Activated naive CD4-positive, alpha-beta T cell treated with anti-CD3 and anti-CD28 coated beads, Interleukin-2, amount 10 ng/mL, durations not matched to agents 7 days and 5 days (primary cell): ENCODE measurements at regions of chr17 and their contacts with region 1.

Region 1: GRCh38 chr17:38557836-38558727 is 47.7 kb downstream of the SRCIN1 start:
- DNase-seq: peak; percentile 92
- H3K4me3 Mint-ChIP-seq: peak overlapping the region; percentile 73
- H3K27ac Mint-ChIP-seq: no peak overlapping the region
- H3K4me1 Mint-ChIP-seq: peaks cover 31% of the 10 kb centered on the region
- H3K27me3 Mint-ChIP-seq: peaks cover 92% of the 10 kb centered on the region

Region 2: DNA sequence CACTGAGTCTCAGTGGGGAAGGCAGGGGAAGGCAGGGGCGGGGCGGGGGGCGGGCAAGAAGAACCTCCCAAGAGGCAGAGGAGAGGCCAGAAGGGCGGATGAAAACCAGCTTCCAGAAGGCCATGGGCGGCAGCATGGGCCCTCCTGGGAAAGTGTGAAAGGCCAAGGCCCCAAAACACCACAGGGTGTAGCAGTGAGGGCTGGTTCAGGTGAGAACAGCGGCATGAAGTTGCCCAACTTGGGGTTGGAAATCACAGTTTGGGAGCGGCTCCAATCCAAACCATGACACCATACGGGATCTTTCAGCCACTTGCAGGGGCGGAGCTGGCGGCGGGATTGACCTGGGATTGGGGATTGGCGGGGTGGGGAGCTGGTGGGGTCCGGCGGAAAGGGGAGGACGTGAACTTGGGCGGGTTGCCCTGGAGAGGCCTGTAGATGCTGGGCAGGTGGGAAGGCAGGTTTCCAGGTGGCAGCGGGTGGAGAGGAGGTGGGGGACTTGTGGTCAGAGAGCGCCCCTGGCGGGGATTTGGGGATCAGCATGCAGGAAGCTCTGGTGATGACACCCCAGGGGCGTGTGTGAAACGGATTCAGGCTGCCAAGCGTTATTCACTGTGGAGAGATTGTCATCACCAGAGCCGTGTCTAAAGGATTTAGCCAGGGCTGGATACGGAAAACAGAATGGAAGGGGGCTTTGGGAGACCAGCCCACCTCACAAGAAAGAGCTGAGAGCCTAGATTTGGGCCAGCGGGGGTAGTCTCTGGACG is 48.9 kb before region 1 on chr17:
- CTCF ChIA-PET with region 1: interaction called, 10 read pairs
- DNase-seq: peak; percentile 82
- H3K4me3 Mint-ChIP-seq: peak overlapping the region; percentile 60
- H3K27ac Mint-ChIP-seq: no peak overlapping the region
- H3K4me1 Mint-ChIP-seq: peaks cover 11% of the 10 kb centered on the region
- H3K27me3 Mint-ChIP-seq: peaks cover 62% of the 10 kb centered on the region

Region 3: GRCh38 chr17:38577244-38577643 is 19.2 kb after region 1 on chr17:
- CTCF ChIA-PET with region 1: interaction called, 81 read pairs
- DNase-seq: no peak
- H3K4me3 Mint-ChIP-seq: no peak overlapping the region
- H3K27ac Mint-ChIP-seq: no peak overlapping the region
- H3K4me1 Mint-ChIP-seq: peaks cover 6% of the 10 kb centered on the region
- H3K27me3 Mint-ChIP-seq: peaks cover 97% of the 10 kb centered on the region

Region 4: GRCh38 chr17:38584350-38584925 is 26.4 kb after region 1 on chr17:
- CTCF ChIA-PET with region 1: interaction called, 81 read pairs
- DNase-seq: peak; percentile 63
- H3K4me3 Mint-ChIP-seq: no peak overlapping the region
- H3K27ac Mint-ChIP-seq: no peak overlapping the region
- H3K4me1 Mint-ChIP-seq: peaks cover 16% of the 10 kb centered on the region
- H3K27me3 Mint-ChIP-seq: peaks cover 92% of the 10 kb centered on the region

Region 5: GRCh38 chr17:38605888-38606645 is 48.0 kb after region 1 on chr17 and contains the start of gene SRCIN1:
- CTCF ChIA-PET with region 1: interaction called, 23 read pairs
- DNase-seq: peak; percentile 64
- H3K4me3 Mint-ChIP-seq: peak within 1 kb of the TSS; percentile 61
- H3K27ac Mint-ChIP-seq: no peak within 1 kb of the TSS
- H3K4me1 Mint-ChIP-seq: peaks cover 14% of the 10 kb centered on the region
- H3K27me3 Mint-ChIP-seq: peaks cover 98% of the 10 kb centered on the region

Region 6: GRCh38 chr17:38667099-38667786 is 109.2 kb after region 1 on chr17:
- CTCF ChIA-PET with region 1: interaction called, 154 read pairs
- DNase-seq: peak; percentile 70
- H3K4me3 Mint-ChIP-seq: no peak overlapping the region
- H3K27ac Mint-ChIP-seq: no peak overlapping the region
- H3K4me1 Mint-ChIP-seq: peaks cover 15% of the 10 kb centered on the region
- H3K27me3 Mint-ChIP-seq: peaks cover 88% of the 10 kb centered on the region

Region 7: DNA sequence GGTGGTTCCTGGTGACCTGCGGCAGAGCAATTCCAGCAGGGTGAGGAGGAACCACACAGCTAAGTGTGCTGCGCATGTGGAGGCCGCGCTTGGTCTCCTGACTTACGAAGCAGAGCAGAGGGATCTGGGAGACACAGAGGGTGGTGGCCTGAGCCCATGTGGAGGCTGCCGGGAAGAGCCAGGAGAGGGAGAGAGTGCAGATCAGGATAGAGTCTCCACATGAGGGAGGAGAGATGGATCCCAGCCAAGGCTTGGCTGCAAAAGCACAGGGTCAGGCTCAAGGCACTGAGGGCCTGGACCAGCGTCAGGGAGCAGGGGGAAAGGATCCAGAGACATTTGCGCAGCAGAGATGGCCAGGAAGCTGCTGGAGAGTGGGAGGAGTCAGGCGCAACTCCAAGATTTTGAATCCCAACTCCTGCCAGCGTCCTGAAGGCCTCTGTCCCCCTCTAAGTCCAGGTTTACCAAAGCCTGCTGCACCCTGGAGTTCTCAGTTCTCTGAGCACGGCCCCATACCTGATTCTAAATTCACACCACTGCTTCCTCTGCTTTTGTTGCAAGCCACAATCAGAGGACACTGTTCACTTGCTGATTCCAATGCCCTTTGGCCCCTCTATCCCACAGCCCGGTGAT is 135.7 kb after region 1 on chr17:
- CTCF ChIA-PET with region 1: no interaction called
- DNase-seq: no peak
- H3K4me3 Mint-ChIP-seq: no peak overlapping the region
- H3K27ac Mint-ChIP-seq: peak overlapping the region; percentile 6
- H3K4me1 Mint-ChIP-seq: peaks cover 20% of the 10 kb centered on the region
- H3K27me3 Mint-ChIP-seq: peaks cover 39% of the 10 kb centered on the region

Region 8: GRCh38 chr17:38735161-38735997 is 177.3 kb after region 1 on chr17:
- CTCF ChIA-PET with region 1: interaction called, 10 read pairs
- DNase-seq: peak; percentile 82
- H3K4me3 Mint-ChIP-seq: no peak overlapping the region
- H3K27ac Mint-ChIP-seq: peak overlapping the region; percentile 42
- H3K4me1 Mint-ChIP-seq: peaks cover 47% of the 10 kb centered on the region
- H3K27me3 Mint-ChIP-seq: peaks cover 23% of the 10 kb centered on the region